Keratinocyte (primary cell): ENCODE measurements at regions of chr14 and their contacts with region 1.

Region 1: DNA sequence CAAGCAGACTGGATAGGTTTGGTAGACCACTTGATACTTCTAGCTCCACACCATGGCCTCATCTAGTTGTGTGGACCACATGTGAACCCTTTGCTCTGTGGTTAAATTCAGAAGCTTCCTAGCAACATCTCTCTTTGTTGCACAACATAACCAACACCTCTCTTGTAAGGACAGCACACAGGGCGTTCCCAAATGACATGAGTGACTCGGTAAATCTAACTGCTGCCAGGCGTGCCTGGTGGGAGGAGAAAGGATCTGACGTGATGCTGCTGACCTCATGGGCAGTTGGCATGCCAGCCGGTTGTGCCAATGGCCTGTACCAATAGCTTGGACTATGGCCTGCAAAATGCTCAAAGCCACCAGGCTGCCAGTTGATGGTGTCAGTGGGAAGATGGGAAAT is 93.8 kb downstream of the CPSF2 start:
- DNase-seq: no peak
- H3K4me3 ChIP-seq: no peak overlapping the region
- H3K27ac ChIP-seq: no peak overlapping the region
- H3K4me1 ChIP-seq: no peaks in the 10 kb centered on the region
- H3K27me3 ChIP-seq: no peaks in the 10 kb centered on the region
- CTCF ChIP-seq: no peak

Region 2: GRCh38 chr14:92254786-92255185 is 39.2 kb after region 1 on chr14:
- dilution Hi-C with region 1: no loop called
- DNase-seq: no peak
- H3K4me3 ChIP-seq: no peak overlapping the region
- H3K27ac ChIP-seq: no peak overlapping the region
- H3K4me1 ChIP-seq: no peaks in the 10 kb centered on the region
- H3K27me3 ChIP-seq: peaks cover 44% of the 10 kb centered on the region
- CTCF ChIP-seq: no peak

Region 3: DNA sequence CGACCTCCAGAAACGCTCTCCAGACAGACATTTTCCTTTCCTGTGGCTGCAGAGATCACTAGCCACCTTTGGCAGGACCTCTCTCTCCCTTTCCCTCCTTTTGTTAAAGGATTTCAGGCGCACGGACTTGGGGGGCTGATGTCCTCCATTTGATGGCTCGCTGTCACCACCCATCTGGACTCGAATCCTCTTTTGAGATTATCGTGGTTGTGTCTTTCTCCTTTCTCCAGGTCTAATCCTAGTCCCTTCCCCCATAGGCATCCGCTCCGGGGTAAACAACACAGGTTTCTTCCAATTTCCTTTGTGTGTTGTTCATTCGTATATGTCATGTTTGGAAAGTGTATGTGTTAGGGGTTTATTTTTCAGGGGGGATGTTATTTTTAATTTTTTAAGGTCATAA is 50.6 kb after region 1 on chr14:
- dilution Hi-C with region 1: loop called (anchors 5 kb)
- DNase-seq: no peak
- H3K4me3 ChIP-seq: no peak overlapping the region
- H3K27ac ChIP-seq: no peak overlapping the region
- H3K4me1 ChIP-seq: no peaks in the 10 kb centered on the region
- H3K27me3 ChIP-seq: peaks cover 7% of the 10 kb centered on the region
- CTCF ChIP-seq: no peak

Region 4: DNA sequence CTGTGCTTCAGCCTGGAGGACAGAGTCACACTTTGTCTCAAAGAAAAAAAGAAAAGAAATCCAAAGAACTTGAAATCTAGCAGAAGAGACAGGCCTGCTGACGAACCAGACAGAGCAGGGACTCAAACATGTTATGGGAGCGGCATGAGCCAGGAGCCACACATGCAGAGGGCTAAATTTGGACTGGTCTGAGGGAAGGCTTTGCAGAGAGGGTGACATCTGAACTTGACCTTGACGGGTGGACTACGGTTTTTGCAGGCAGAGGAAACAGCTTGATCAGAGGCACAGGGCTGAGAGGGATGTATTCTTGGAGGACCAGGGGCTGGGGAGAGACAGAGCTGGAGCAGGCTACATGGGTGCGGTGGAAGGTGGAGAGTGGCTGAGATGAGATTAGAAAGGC is 86.9 kb after region 1 on chr14:
- dilution Hi-C with region 1: no loop called
- DNase-seq: no peak
- H3K4me3 ChIP-seq: no peak overlapping the region
- H3K27ac ChIP-seq: no peak overlapping the region
- H3K4me1 ChIP-seq: no peaks in the 10 kb centered on the region
- H3K27me3 ChIP-seq: no peaks in the 10 kb centered on the region
- CTCF ChIP-seq: no peak